Thyroid gland (tissue), 4 donors: ENCODE measurements at regions of chrX and their contacts with region 1.

Region 1: GRCh38 chrX:109485470-109486340 is 3.8 kb upstream of the GUCY2F start:
- DNase-seq: peak; percentile 49 to 53
- H3K4me3 ChIP-seq: no peak overlapping the region
- H3K27ac ChIP-seq: no peak overlapping the region
- H3K4me1 ChIP-seq: no peaks in the 10 kb centered on the region
- H3K27me3 ChIP-seq: no peaks in the 10 kb centered on the region
- CTCF ChIP-seq: peak; percentile 76 to 93 (median 88)
- POLR2A ChIP-seq: no peak

Region 2: DNA sequence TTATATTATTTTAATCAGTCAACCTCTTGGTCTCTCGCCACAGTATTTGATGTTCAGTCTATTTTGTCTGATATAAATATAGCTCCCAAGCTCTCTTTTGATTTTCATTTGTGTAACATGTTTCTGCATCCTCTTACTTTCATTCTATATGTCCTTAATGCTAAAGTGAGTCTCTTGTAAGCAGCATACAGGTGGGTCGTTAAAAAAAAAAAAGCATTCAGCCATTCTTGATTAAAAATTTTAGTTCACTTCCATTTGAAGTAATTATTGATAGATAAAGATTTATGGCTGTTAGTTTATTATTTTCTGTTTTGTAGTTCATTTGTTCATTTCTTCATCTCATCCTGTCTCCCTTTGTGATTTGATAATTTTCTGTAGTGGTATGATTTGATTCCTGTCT is 232.9 kb before region 1 on chrX:
- intact Hi-C with region 1: no loop called
- DNase-seq: no peak
- H3K4me3 ChIP-seq: no peak overlapping the region
- H3K27ac ChIP-seq: no peak overlapping the region
- H3K4me1 ChIP-seq: no peaks in the 10 kb centered on the region
- H3K27me3 ChIP-seq: no peaks in the 10 kb centered on the region
- CTCF ChIP-seq: no peak
- POLR2A ChIP-seq: no peak

Region 3: DNA sequence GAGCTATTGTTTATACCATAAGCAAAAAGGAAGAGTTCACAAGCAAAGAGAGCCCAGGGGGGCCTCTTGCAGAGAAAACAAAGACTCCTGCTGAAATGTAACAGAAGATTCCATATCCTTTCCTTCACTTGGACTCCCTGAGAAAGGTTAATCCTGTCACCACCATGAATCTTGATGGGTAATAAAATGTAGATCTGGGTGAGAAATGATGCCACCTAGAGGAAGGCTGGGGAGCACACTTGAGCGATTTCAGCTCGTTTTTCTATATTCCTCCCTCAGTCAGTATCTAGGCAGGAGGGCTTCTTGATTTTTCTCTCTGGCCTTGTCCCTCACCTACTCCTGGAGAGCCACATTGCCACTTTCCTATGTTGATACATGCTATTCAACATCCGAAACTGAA is 149.5 kb after region 1 on chrX:
- intact Hi-C with region 1: loop called (anchors 10 kb)
- DNase-seq: no peak
- H3K4me3 ChIP-seq: no peak overlapping the region
- H3K27ac ChIP-seq: no peak overlapping the region
- H3K4me1 ChIP-seq: no peaks in the 10 kb centered on the region
- H3K27me3 ChIP-seq: no peaks in the 10 kb centered on the region
- CTCF ChIP-seq: peak in 3 of 6 experiments; percentile 16 to 37 (median 20)
- POLR2A ChIP-seq: no peak